PC-9 (cell line): ENCODE measurements at regions of chr2 and their contacts with region 1.

Region 1: DNA sequence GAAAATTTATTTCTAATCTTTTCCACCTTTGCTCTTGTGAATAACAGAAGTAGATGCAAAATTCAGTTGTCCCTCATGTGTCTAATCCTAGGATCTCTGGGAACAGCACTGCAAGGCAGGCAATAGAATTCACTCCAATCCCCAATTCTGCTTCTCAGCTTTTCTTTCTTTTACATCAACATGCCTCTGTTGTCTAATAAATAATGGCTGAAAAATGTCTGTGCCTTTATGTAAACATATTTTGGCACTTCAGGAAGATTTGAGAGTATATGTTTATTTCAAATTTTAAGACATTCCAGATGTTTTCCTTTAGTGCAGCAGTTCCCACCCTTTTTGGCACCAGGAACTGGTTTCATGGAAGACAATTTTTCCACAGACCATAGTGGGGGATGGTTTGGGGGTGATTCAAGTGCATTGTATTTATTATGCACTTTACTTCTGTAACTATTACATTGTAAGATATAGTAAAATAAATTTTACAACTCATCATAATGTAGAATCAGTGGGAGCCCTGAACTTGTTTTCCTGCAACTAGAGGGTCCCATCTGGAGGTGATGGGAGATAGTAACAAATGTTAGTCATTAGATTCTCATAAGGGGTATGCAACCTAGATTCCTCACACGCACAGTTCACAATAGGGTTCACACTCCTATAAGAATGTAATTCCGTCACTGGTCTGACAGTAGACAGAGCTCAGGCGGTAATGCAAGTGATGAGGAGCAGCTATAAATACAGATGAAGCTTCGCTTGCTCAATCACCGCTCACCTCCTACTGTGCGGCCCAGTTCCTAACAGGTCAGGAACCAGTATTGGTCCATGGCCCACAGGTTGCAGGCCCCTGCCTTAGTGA is 590.3 kb upstream of the CNTNAP5 start:
- DNase-seq: no peak
- H3K4me3 ChIP-seq: no peak overlapping the region
- H3K27ac ChIP-seq: no peak overlapping the region
- H3K4me1 ChIP-seq: no peaks in the 10 kb centered on the region
- H3K27me3 ChIP-seq: no peaks in the 10 kb centered on the region
- CTCF ChIP-seq: no peak

Region 2: GRCh38 chr2:121810959-121811853 is 1623.6 kb before region 1 on chr2:
- CTCF ChIA-PET with region 1: no interaction called
- POLR2A ChIA-PET with region 1: interaction called, 10 read pairs
- intact Hi-C with region 1: no loop called
- DNase-seq: peak; percentile 25 to 46
- H3K4me3 ChIP-seq: no peak overlapping the region
- H3K27ac ChIP-seq: no peak overlapping the region
- H3K4me1 ChIP-seq: no peaks in the 10 kb centered on the region
- H3K27me3 ChIP-seq: peaks cover 93% of the 10 kb centered on the region
- CTCF ChIP-seq: peak; percentile 78

Region 3: GRCh38 chr2:123262856-123263255 is 171.9 kb before region 1 on chr2:
- CTCF ChIA-PET with region 1: no interaction called
- POLR2A ChIA-PET with region 1: no interaction called
- intact Hi-C with region 1: no loop called
- DNase-seq: no peak
- H3K4me3 ChIP-seq: no peak overlapping the region
- H3K27ac ChIP-seq: no peak overlapping the region
- H3K4me1 ChIP-seq: no peaks in the 10 kb centered on the region
- H3K27me3 ChIP-seq: no peaks in the 10 kb centered on the region
- CTCF ChIP-seq: no peak

Region 4: GRCh38 chr2:123688231-123688940 is 253.6 kb after region 1 on chr2:
- CTCF ChIA-PET with region 1: no interaction called
- POLR2A ChIA-PET with region 1: no interaction called
- intact Hi-C with region 1: no loop called
- DNase-seq: no peak
- H3K4me3 ChIP-seq: no peak overlapping the region
- H3K27ac ChIP-seq: no peak overlapping the region
- H3K4me1 ChIP-seq: no peaks in the 10 kb centered on the region
- H3K27me3 ChIP-seq: peaks cover 53% of the 10 kb centered on the region
- CTCF ChIP-seq: no peak